Activated CD4-positive, alpha-beta T cell treated with anti-CD3 and anti-CD28 coated beads, Interleukin-2, amount 10 ng/mL, durations not matched to agents 7 days and 5 days (primary cell): ENCODE measurements at regions of chr17 and their contacts with region 1.

Region 1: GRCh38 chr17:2253768-2254406 is 49.7 kb downstream of the SMG6 start:
- DNase-seq: peak; percentile 63
- H3K4me3 Mint-ChIP-seq: peak overlapping the region; percentile 26
- H3K27ac Mint-ChIP-seq: peak overlapping the region; percentile 91
- H3K4me1 Mint-ChIP-seq: peaks cover 82% of the 10 kb centered on the region
- H3K27me3 Mint-ChIP-seq: no peaks in the 10 kb centered on the region

Region 2: GRCh38 chr17:2101448-2102257 is 152.2 kb before region 1 on chr17:
- CTCF ChIA-PET with region 1: no interaction called
- POLR2A ChIA-PET with region 1: no interaction called
- DNase-seq: peak; percentile 62
- H3K4me3 Mint-ChIP-seq: peak overlapping the region; percentile 10
- H3K27ac Mint-ChIP-seq: peak overlapping the region; percentile 80
- H3K4me1 Mint-ChIP-seq: peaks cover 59% of the 10 kb centered on the region
- H3K27me3 Mint-ChIP-seq: no peaks in the 10 kb centered on the region

Region 3: DNA sequence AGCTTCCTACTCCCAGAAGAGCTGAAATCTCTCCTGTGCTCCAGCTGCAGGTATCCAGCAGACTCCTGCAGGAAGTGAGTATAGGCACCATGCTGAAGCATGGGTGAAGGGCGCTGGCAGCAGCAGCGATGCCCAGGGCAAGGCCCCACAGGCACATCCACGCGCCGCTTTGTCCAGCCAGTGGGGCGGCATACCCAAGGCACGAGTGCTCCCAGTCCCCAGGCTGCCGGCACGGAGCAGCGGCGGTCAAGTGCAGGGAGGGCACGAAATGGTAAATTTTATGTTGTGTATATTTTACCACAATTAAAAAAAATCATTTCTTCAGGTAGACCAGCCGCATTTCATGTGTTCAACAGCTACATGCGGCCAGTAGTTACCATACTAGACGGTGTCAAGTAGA is 125.9 kb before region 1 on chr17:
- CTCF ChIA-PET with region 1: no interaction called
- POLR2A ChIA-PET with region 1: no interaction called
- DNase-seq: no peak
- H3K4me3 Mint-ChIP-seq: no peak overlapping the region
- H3K27ac Mint-ChIP-seq: no peak overlapping the region
- H3K4me1 Mint-ChIP-seq: peaks cover 18% of the 10 kb centered on the region
- H3K27me3 Mint-ChIP-seq: no peaks in the 10 kb centered on the region

Region 4: GRCh38 chr17:2227025-2227699 is 26.7 kb before region 1 on chr17:
- CTCF ChIA-PET with region 1: no interaction called
- POLR2A ChIA-PET with region 1: no interaction called
- DNase-seq: no peak
- H3K4me3 Mint-ChIP-seq: no peak overlapping the region
- H3K27ac Mint-ChIP-seq: no peak overlapping the region
- H3K4me1 Mint-ChIP-seq: peaks cover 60% of the 10 kb centered on the region
- H3K27me3 Mint-ChIP-seq: no peaks in the 10 kb centered on the region

Region 5: DNA sequence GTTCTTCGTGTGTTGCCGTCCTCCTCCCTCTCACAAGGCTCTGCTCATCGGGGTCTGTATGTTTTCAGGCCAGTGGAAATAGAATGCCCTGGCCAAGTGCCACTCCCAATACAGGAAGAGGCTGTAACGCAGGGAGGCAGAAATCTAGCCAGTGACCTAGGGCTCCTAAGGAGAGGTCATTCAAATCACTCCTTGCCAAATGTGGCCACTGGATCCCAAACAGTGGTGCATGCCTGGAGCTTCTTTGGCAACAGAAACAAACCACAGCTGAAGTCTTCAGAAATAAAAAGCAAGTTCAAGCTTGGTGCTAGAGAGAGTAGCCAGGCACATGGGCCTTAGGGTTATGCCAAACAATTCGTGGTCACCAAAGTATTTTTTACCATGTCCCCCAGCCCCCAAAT is 16.4 kb before region 1 on chr17:
- CTCF ChIA-PET with region 1: interaction called, 4 read pairs
- POLR2A ChIA-PET with region 1: interaction called, 12 read pairs
- DNase-seq: no peak
- H3K4me3 Mint-ChIP-seq: no peak overlapping the region
- H3K27ac Mint-ChIP-seq: no peak overlapping the region
- H3K4me1 Mint-ChIP-seq: peaks cover 60% of the 10 kb centered on the region
- H3K27me3 Mint-ChIP-seq: no peaks in the 10 kb centered on the region

Region 6: DNA sequence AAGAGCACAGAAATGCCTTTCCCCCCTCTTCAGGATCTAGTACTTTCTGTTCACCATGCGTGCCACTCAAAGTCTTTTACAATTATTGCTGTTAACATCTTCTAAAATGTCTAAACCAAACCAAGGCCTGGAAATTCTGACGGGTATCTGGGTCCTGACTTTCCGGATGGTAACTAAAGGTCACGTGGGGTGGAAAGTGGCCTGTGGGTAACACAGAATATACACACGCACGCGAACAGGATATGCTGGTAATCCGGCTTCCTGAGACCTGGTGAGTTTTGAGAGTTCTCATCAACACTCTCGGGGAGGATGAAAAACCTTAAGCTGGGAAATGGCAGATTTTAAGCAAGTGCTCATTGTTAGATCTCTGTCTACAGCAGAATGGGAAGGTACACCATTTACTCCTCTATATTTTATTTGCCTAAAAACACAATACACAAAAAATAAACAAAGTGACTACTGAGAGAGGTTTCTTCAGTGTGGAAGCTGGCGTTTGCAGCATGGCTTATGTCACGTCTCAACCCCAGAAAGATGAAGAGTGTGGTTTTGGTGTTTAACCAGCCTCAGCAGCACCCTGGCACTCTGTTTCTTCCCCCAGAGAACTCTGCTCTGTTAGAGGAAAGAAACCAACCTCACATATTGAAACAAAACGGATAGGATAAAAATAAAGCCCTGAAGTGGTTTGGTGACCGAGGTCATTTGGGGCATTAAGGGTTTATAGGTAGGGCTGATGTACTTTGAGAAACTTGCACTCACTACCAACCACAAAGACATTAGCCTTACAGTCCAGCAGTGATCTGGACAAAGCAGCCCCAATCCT is 12.4 kb after region 1 on chr17:
- CTCF ChIA-PET with region 1: interaction called, 16 read pairs
- POLR2A ChIA-PET with region 1: interaction called, 3 read pairs
- DNase-seq: peak; percentile 95
- H3K4me3 Mint-ChIP-seq: peak overlapping the region; percentile 74
- H3K27ac Mint-ChIP-seq: peak overlapping the region; percentile 96
- H3K4me1 Mint-ChIP-seq: peaks cover 84% of the 10 kb centered on the region
- H3K27me3 Mint-ChIP-seq: no peaks in the 10 kb centered on the region

Region 7: GRCh38 chr17:2312736-2313135 is 58.8 kb after region 1 on chr17:
- CTCF ChIA-PET with region 1: no interaction called
- POLR2A ChIA-PET with region 1: no interaction called
- DNase-seq: no peak
- H3K4me3 Mint-ChIP-seq: no peak overlapping the region
- H3K27ac Mint-ChIP-seq: no peak overlapping the region
- H3K4me1 Mint-ChIP-seq: peaks cover 5% of the 10 kb centered on the region
- H3K27me3 Mint-ChIP-seq: no peaks in the 10 kb centered on the region